ENCODE measurements at regions of chr15 and their contacts with region 1.

Region 1: GRCh38 chr15:85618956-85619491 is 175.7 kb downstream of the KLHL25 start:
- DNase-seq: peak; percentile 42
- H3K4me3 Mint-ChIP-seq: no peak overlapping the region
- H3K27ac Mint-ChIP-seq: no peak overlapping the region
- H3K4me1 Mint-ChIP-seq: peaks cover 22% of the 10 kb centered on the region
- H3K27me3 Mint-ChIP-seq: no peaks in the 10 kb centered on the region

Region 2: DNA sequence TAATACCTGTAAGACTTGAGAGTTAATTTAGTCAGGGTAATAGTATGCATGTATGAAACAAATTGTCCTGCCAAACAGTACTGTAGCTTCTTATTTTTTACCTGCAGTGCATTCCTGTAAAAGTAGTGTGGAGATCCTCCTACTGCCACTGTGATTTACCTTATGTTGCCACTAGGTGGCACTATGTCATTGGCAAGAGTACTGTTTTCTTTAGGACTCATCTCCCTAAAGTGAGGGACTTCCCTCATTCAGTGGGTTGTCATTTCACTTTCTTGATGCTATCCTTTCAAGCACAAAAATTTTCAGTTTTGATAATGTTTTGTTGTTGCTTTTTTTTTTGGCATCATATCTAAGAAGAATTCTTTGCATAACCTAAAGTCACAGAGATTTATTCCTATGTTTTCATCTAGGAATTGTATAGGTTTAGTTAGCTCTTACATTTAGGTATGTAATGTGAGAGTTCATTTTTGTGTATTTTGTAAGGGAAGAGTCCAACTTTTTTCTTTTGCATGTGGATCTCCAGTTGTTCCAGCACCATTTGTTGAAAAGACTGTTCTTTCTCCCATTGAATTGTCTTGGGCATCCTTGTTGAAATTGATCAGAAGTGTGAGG is 133.0 kb before region 1 on chr15:
- intact Hi-C with region 1: loop called (anchors 2 kb)
- DNase-seq: peak; percentile 54
- H3K4me3 Mint-ChIP-seq: no peak overlapping the region
- H3K27ac Mint-ChIP-seq: no peak overlapping the region
- H3K4me1 Mint-ChIP-seq: peaks cover 57% of the 10 kb centered on the region
- H3K27me3 Mint-ChIP-seq: no peaks in the 10 kb centered on the region

Region 3: DNA sequence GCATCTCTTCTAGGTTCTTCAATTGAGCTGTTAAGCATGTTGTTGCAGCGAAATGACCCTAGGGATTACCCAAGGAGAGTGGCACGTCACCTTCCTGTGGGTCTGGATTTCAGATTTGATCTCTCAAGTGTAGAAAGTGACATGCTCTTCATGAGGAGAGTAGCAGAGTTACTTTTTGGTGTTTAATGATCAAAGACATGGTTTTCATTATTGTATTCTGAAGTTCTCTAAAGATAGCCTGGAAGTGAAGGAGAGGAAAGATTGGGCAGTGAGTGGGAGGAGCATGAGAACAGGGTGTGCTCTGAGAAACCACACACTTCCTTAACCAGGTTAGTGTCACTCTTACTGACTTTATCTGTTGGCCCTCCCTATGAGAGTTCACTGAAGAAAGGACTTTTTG is 85.0 kb before region 1 on chr15:
- intact Hi-C with region 1: no loop called
- DNase-seq: peak; percentile 4
- H3K4me3 Mint-ChIP-seq: peak overlapping the region; percentile 56
- H3K27ac Mint-ChIP-seq: peak overlapping the region; percentile 88
- H3K4me1 Mint-ChIP-seq: peaks cover 42% of the 10 kb centered on the region
- H3K27me3 Mint-ChIP-seq: peaks cover 2% of the 10 kb centered on the region

Region 4: GRCh38 chr15:85597155-85597815 is 21.7 kb before region 1 on chr15:
- intact Hi-C with region 1: loop called (anchors 1 kb)
- DNase-seq: peak; percentile 21
- H3K4me3 Mint-ChIP-seq: peak overlapping the region; percentile 53
- H3K27ac Mint-ChIP-seq: peak overlapping the region; percentile 41
- H3K4me1 Mint-ChIP-seq: peaks cover 52% of the 10 kb centered on the region
- H3K27me3 Mint-ChIP-seq: no peaks in the 10 kb centered on the region

Region 5: DNA sequence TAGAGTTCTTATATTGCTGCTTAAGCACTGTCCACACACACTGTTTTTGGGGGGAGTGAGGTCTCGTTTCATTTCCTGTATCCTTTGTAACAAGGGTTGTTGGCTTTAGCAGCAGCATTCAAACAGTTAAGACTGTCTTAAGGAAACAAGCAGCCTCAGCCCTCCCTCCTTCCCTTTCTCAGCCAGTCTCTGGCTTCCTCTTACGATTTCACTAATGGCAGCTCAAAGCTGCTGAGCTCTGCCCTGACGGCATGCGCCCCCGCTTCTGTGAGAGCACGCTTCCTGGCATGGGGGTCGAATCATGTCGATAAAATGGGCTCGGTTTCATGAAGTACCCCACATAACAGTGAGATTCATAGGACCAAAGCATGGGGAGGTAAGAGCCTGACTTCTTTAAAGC is 70.7 kb after region 1 on chr15:
- intact Hi-C with region 1: loop called (anchors 1 kb)
- DNase-seq: peak; percentile 56
- H3K4me3 Mint-ChIP-seq: peak overlapping the region; percentile 96
- H3K27ac Mint-ChIP-seq: peak overlapping the region; percentile 100
- H3K4me1 Mint-ChIP-seq: peaks cover 73% of the 10 kb centered on the region
- H3K27me3 Mint-ChIP-seq: no peaks in the 10 kb centered on the region

Region 6: GRCh38 chr15:85723960-85724945 is 105.2 kb after region 1 on chr15:
- intact Hi-C with region 1: loop called (anchors 1 kb)
- DNase-seq: no peak
- H3K4me3 Mint-ChIP-seq: peak overlapping the region; percentile 72
- H3K27ac Mint-ChIP-seq: peak overlapping the region; percentile 90
- H3K4me1 Mint-ChIP-seq: peaks cover 47% of the 10 kb centered on the region
- H3K27me3 Mint-ChIP-seq: no peaks in the 10 kb centered on the region

Region 7: GRCh38 chr15:86021281-86022264 is 402.5 kb after region 1 on chr15:
- intact Hi-C with region 1: no loop called
- DNase-seq: no peak
- H3K4me3 Mint-ChIP-seq: no peak overlapping the region
- H3K27ac Mint-ChIP-seq: no peak overlapping the region
- H3K4me1 Mint-ChIP-seq: no peaks in the 10 kb centered on the region
- H3K27me3 Mint-ChIP-seq: no peaks in the 10 kb centered on the region